Heart left ventricle (tissue), 16 donors: ENCODE measurements at regions of chr4 and their contacts with region 1.

Region 1: DNA sequence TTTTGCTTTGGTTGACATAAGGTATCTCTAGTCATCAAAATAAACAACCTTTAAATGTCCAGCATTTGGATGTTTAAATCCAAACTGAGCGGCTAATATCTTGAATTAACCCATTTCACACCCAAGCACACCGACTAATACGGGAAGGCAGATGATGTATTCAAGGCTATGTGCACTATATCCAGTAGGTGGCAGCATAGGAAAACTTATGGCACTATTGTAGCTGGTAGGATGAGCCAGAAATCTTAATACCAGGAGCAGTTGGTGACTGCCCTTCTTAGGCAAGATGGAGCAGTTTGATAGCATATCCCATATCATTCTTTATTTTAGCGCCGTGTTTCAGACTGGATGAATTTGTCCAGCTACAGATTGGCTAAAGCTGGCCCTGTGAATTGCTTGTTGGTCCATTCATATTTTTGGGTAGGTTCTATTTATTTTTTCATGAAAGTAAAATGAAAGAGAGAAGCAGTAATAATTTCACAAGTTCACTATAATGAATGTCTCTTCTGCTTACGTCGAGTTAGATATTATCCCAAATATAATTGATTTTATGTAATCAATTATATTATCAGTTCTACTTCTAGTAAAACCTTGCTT is 24.4 kb downstream of the UCHL1 start:
- DNase-seq: peak in 2 of 5 donors; percentile 35 to 50
- ATAC-seq: peak; percentile 94 to 96 (median 95)
- H3K4me3 ChIP-seq: no peak overlapping the region
- H3K27ac ChIP-seq: no peak overlapping the region
- H3K4me1 ChIP-seq: peaks cover 0 to 7% (median 0%) of the 10 kb centered on the region in 12 donors
- H3K27me3 ChIP-seq: peaks cover 0 to 4% (median 0%) of the 10 kb centered on the region in 9 donors
- CTCF ChIP-seq: peak; percentile 78 to 94 (median 87)
- POLR2A ChIP-seq: no peak

Region 2: GRCh38 chr4:41525129-41525528 is 244.0 kb after region 1 on chr4:
- intact Hi-C with region 1: loop called in 2 of 10 experiments (anchors 10 kb)
- DNase-seq: no peak
- ATAC-seq: peak; percentile 65 to 77 (median 70)
- H3K4me3 ChIP-seq: no peak overlapping the region
- H3K27ac ChIP-seq: peak overlapping the region in 7 of 12 donors; percentile 6 to 57 (median 44)
- H3K4me1 ChIP-seq: peaks cover 0 to 51% (median 23%) of the 10 kb centered on the region in 12 donors
- H3K27me3 ChIP-seq: no peaks in the 10 kb centered on the region
- CTCF ChIP-seq: no peak
- POLR2A ChIP-seq: no peak

Region 3: DNA sequence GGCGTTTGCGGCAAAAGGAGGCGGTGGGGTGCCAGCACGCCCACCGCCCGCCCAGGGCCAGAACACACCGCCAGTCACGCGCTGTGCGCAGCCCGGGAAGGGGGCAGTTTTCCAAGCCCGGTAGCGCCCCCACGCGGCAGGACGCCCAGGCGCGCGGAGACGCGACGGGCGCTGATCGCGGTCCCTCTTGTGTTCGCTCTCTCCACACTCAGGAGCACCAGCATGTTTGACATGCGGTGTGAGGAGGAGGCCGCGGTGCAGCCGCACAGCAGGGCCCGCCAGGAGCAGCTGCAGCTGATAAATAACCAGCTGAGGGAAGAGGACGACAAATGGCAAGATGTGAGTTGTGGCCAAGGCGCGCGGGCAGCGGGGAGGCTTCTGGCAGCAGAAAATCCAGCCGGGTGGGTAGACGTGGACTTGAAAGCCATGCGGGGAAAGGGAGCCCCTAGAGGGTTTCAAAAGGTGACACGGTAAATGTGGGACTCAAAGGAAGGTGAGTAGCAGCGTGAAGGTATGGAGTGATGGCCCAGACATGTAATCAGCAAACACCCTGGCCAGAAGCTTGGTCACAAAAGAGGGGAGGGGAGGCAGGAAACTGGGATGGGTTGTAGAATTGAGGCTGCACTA is 363.3 kb after region 1 on chr4:
- intact Hi-C with region 1: loop called in 4 of 10 experiments (anchors 1 to 5 kb)
- DNase-seq: peak; percentile 64 to 87 (median 77)
- ATAC-seq: peak; percentile 63 to 94 (median 92)
- H3K4me3 ChIP-seq: peak overlapping the region in 6 of 12 donors; percentile 7 to 31 (median 14)
- H3K27ac ChIP-seq: peak overlapping the region in 4 of 12 donors; percentile 27 to 55 (median 46)
- H3K4me1 ChIP-seq: peaks cover 0 to 36% (median 24%) of the 10 kb centered on the region in 12 donors
- H3K27me3 ChIP-seq: peaks cover 0 to 19% (median 0%) of the 10 kb centered on the region in 9 donors
- CTCF ChIP-seq: peak; percentile 76 to 96 (median 90)
- POLR2A ChIP-seq: no peak

Region 4: DNA sequence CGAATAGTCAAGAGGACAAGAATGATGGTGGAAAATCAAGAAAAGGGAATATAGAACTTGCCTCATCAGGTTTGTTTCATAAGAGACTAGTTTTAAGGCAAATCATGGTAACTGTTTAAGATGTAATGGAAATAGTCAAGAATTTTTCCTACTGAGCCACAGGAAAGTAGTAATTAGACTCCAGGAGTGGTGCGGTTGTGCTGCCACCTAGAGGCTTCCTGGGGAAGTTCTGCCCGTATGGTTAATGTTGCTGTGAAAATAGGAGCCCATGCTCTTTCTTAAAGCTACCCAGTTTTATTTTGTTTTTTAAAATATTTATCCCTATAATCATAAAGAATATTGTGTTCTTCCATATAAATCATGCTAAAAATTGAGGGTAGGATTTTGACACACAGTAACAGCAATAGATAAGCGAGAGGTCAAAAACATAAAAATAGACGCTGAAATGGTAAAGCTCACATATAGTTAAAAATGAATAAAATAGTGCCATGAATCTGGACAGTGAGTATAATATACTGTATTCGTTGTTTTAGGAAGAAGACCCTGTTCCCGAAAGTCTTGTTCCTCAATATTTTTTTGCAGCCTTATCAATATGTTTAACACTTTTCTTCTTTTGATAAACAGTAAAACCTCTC is 380.4 kb after region 1 on chr4:
- intact Hi-C with region 1: loop called (anchors 1 to 2 kb)
- DNase-seq: peak in 3 of 5 donors; percentile 50 to 59 (median 51)
- ATAC-seq: peak in 3 of 4 donors; percentile 46 to 55 (median 47)
- H3K4me3 ChIP-seq: no peak overlapping the region
- H3K27ac ChIP-seq: peak overlapping the region in 1 of 12 donors; percentile 9
- H3K4me1 ChIP-seq: peaks cover 0 to 23% (median 10%) of the 10 kb centered on the region in 12 donors
- H3K27me3 ChIP-seq: no peaks in the 10 kb centered on the region
- CTCF ChIP-seq: peak; percentile 94 to 99 (median 97)
- POLR2A ChIP-seq: no peak

Region 5: DNA sequence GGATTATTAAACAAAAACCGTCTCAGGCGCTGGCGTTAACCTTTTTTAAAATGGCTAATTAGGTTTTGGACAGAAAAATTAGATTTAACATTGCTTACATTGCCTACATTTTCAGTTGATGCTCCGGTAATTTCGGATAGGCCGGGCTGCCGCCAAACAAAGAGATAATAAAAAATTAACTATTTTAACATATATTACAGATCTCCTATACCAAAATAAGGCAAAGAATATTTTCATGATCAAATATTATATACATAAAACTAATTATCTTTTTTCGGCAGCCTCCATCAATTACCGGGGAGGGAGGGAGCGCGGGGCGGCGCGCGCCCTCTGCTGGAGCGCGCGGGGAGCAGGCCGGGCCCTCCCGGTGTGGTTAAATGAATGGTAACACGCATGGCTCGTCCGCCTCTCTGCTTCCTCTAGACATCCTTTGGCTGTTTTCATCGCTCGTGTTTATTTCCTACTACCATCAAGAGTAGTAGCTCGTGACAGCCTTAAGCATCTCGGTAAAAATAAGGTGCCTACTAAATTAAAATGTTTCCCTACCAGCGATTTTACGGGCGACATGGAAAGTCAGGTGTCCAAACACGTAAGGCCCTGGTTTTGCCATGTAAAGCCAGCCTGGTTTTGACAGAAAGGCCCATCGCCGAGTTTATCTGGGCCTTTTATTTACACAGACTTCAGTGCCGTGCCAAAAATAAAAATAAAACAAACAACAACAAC is 601.6 kb after region 1 on chr4:
- intact Hi-C with region 1: loop called in 8 of 10 experiments (anchors 2 to 5 kb)
- DNase-seq: peak in 2 of 5 donors; percentile 40 to 73
- ATAC-seq: peak; percentile 60 to 92 (median 82)
- H3K4me3 ChIP-seq: peak overlapping the region in 11 of 12 donors; percentile 10 to 53 (median 40)
- H3K27ac ChIP-seq: no peak overlapping the region
- H3K4me1 ChIP-seq: peaks cover 4 to 35% (median 22%) of the 10 kb centered on the region in 12 donors
- H3K27me3 ChIP-seq: peaks cover 32 to 75% (median 62%) of the 10 kb centered on the region in 9 donors
- CTCF ChIP-seq: peak; percentile 84 to 99 (median 94)
- POLR2A ChIP-seq: no peak

Region 6: GRCh38 chr4:41887821-41888686 is 606.9 kb after region 1 on chr4:
- intact Hi-C with region 1: loop called in 8 of 10 experiments (anchors 2 to 5 kb)
- DNase-seq: no peak
- ATAC-seq: no peak
- H3K4me3 ChIP-seq: no peak overlapping the region
- H3K27ac ChIP-seq: no peak overlapping the region
- H3K4me1 ChIP-seq: no peaks in the 10 kb centered on the region
- H3K27me3 ChIP-seq: peaks cover 0 to 45% (median 15%) of the 10 kb centered on the region in 9 donors
- CTCF ChIP-seq: peak; percentile 79 to 97 (median 90)
- POLR2A ChIP-seq: no peak